ENCODE measurements at regions of chr19 and their contacts with region 1.

Region 1: GRCh38 chr19:58380722-58381466 is at the start of gene ZNF837:
- DNase-seq: peak; percentile 90 to 100 (median 98)
- ATAC-seq: peak; percentile 93
- H3K4me3 ChIP-seq: peak within 1 kb of the TSS; percentile 97
- H3K4me3 Mint-ChIP-seq: peak within 1 kb of the TSS; percentile 87 to 98 (median 91)
- H3K27ac ChIP-seq: peak within 1 kb of the TSS; percentile 96
- H3K27ac Mint-ChIP-seq: peak within 1 kb of the TSS; percentile 93 to 97 (median 97)
- H3K4me1 ChIP-seq: peaks cover 21 to 25% of the 10 kb centered on the region in 2 donors
- H3K4me1 Mint-ChIP-seq: peaks cover 23 to 40% (median 34%) of the 10 kb centered on the region in 7 donors
- H3K27me3 ChIP-seq: no peaks in the 10 kb centered on the region
- H3K27me3 Mint-ChIP-seq: no peaks in the 10 kb centered on the region
- total RNA-seq, gene ZNF837: 1.4 to 4.3 (median 2.4) TPM

Region 2: GRCh38 chr19:58166708-58167280 is 214.1 kb before region 1 on chr19:
- CTCF ChIA-PET with region 1: no interaction called
- POLR2A ChIA-PET with region 1: no interaction called
- intact Hi-C with region 1: no loop called
- DNase-seq: no peak
- ATAC-seq: no peak
- H3K4me3 ChIP-seq: no peak overlapping the region
- H3K4me3 Mint-ChIP-seq: peak overlapping the region in 1 of 10 donors; percentile 16
- H3K27ac ChIP-seq: no peak overlapping the region
- H3K27ac Mint-ChIP-seq: no peak overlapping the region
- H3K4me1 ChIP-seq: no peaks in the 10 kb centered on the region
- H3K4me1 Mint-ChIP-seq: peaks cover 0 to 2% (median 0%) of the 10 kb centered on the region in 7 donors
- H3K27me3 ChIP-seq: no peaks in the 10 kb centered on the region
- H3K27me3 Mint-ChIP-seq: peaks cover 0 to 4% (median 0%) of the 10 kb centered on the region in 5 donors

Region 3: GRCh38 chr19:58252102-58252685 is 128.7 kb before region 1 on chr19:
- CTCF ChIA-PET with region 1: no interaction called
- POLR2A ChIA-PET with region 1: no interaction called
- intact Hi-C with region 1: no loop called
- DNase-seq: no peak
- ATAC-seq: no peak
- H3K4me3 ChIP-seq: no peak overlapping the region
- H3K4me3 Mint-ChIP-seq: no peak overlapping the region
- H3K27ac ChIP-seq: no peak overlapping the region
- H3K27ac Mint-ChIP-seq: no peak overlapping the region
- H3K4me1 ChIP-seq: no peaks in the 10 kb centered on the region
- H3K4me1 Mint-ChIP-seq: no peaks in the 10 kb centered on the region
- H3K27me3 ChIP-seq: no peaks in the 10 kb centered on the region
- H3K27me3 Mint-ChIP-seq: no peaks in the 10 kb centered on the region

Region 4: GRCh38 chr19:58278157-58279041 is 102.5 kb before region 1 on chr19 and contains the start of gene ZNF8:
- CTCF ChIA-PET with region 1: no interaction called
- POLR2A ChIA-PET with region 1: no interaction called
- intact Hi-C with region 1: loop called (anchors 1 kb)
- DNase-seq: peak; percentile 84 to 96 (median 93)
- ATAC-seq: peak; percentile 99
- H3K4me3 ChIP-seq: peak within 1 kb of the TSS; percentile 93
- H3K4me3 Mint-ChIP-seq: peak within 1 kb of the TSS; percentile 89 to 99 (median 95)
- H3K27ac ChIP-seq: peak within 1 kb of the TSS; percentile 80
- H3K27ac Mint-ChIP-seq: peak within 1 kb of the TSS; percentile 88 to 97 (median 96)
- H3K4me1 ChIP-seq: peaks cover 12 to 15% of the 10 kb centered on the region in 2 donors
- H3K4me1 Mint-ChIP-seq: peaks cover 28 to 63% (median 43%) of the 10 kb centered on the region in 7 donors
- H3K27me3 ChIP-seq: no peaks in the 10 kb centered on the region
- H3K27me3 Mint-ChIP-seq: no peaks in the 10 kb centered on the region
- total RNA-seq, gene ZNF8: 5.2 to 10.5 (median 10.0) TPM

Region 5: GRCh38 chr19:58311345-58311865 is 69.5 kb before region 1 on chr19:
- CTCF ChIA-PET with region 1: no interaction called
- POLR2A ChIA-PET with region 1: no interaction called
- intact Hi-C with region 1: no loop called
- DNase-seq: no peak
- ATAC-seq: no peak
- H3K4me3 ChIP-seq: no peak overlapping the region
- H3K4me3 Mint-ChIP-seq: no peak overlapping the region
- H3K27ac ChIP-seq: no peak overlapping the region
- H3K27ac Mint-ChIP-seq: peak overlapping the region in 1 of 9 donors; percentile 4
- H3K4me1 ChIP-seq: peaks cover 6 to 7% of the 10 kb centered on the region in 2 donors
- H3K4me1 Mint-ChIP-seq: peaks cover 16 to 42% (median 34%) of the 10 kb centered on the region in 7 donors
- H3K27me3 ChIP-seq: no peaks in the 10 kb centered on the region
- H3K27me3 Mint-ChIP-seq: no peaks in the 10 kb centered on the region

Region 6: DNA sequence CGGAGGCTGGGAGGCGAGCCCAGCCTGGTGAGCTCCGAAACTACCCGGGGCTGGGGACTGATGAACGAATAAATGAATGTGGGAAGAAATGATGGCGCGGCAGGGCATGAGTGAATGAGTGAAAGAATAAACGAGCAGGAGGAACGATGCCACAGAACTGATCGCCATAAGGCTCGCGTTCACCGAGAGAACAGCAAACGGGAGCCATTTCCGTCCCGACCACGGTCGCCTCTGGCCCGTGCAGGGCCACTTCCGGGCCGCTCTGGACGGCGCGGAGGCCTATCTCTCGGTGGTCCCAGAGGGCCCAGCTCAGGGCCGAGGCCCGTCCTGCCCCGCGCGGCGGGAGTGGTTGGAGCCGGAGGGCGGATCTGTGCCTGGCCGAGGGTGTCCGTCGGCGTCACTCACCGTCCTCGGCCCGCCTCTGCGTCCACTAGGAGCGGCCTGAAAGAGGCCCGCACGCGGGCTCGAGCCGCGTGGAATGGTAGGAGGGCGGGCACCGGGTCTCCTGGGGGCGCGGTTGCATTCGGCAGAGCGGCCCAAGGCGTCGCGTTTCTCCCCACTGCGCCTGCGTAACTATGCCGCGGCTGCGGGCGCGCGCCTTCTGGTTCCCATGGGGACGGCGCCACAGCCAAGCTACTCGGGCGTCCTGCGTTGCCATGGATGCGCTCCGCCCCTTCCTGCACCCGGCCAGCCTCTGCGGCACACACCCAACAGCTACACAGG is 18.5 kb before region 1 on chr19 and contains the start of gene ZNF497:
- CTCF ChIA-PET with region 1: interaction called, 3 read pairs
- POLR2A ChIA-PET with region 1: interaction called, 34 read pairs
- intact Hi-C with region 1: loop called (anchors 1 kb)
- DNase-seq: peak; percentile 91 to 96 (median 95)
- ATAC-seq: peak; percentile 92
- H3K4me3 ChIP-seq: peak within 1 kb of the TSS; percentile 99
- H3K4me3 Mint-ChIP-seq: peak within 1 kb of the TSS; percentile 89 to 99 (median 95)
- H3K27ac ChIP-seq: peak within 1 kb of the TSS; percentile 78
- H3K27ac Mint-ChIP-seq: peak within 1 kb of the TSS; percentile 71 to 96 (median 90)
- H3K4me1 ChIP-seq: peaks cover 5 to 7% of the 10 kb centered on the region in 2 donors
- H3K4me1 Mint-ChIP-seq: peaks cover 7 to 21% (median 11%) of the 10 kb centered on the region in 7 donors
- H3K27me3 ChIP-seq: no peaks in the 10 kb centered on the region
- H3K27me3 Mint-ChIP-seq: peaks cover 0 to 5% (median 0%) of the 10 kb centered on the region in 5 donors
- total RNA-seq, gene ZNF497: 1.0 to 2.7 (median 1.8) TPM

Region 7: DNA sequence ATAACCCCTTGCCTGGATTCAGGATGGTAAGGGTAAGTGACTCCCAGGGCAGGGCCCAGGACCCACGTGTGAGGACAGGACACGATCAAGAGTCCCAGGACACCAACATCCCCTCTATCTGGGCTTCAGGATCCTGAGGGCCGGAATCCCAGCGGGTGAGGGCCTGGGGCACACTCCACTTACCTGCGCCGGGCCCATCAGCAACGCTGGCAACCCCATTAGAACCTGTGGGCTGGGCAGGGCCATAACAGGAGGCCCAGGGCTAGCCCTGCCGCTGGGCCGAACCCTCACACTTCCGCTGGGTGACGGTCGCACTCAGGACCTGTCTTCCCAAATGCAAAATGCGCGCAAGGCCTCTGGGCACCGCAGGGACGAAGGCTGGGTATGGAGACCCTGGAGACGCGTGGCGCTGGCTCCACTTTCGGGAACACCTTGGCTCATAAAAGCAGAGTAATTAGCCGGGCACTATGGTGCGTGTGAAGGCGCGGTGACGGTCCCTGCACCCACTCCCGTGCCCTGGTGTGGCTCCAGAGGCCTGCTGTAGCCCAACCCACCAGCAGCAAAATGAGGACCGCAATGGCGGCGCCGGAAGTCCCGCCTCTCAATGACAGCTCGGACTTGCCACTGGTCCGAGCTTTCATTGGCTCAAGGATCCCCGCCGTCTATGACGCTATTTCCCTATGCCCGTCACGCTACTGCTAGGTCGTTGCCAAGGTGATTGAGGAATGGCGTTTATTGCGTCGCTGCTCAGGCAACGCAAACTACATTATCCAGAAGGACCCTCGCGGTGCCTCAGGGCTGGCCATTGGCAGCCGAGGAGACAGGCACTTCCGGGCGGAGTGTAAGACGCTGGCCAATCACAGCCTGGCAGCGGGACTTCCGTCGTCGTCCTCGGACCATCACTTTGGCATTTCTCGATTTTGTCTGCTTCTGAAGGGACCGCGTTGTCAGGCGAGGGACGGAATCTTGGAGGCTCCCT is 59.0 kb after region 1 on chr19 and contains the start of gene ZNF132:
- CTCF ChIA-PET with region 1: no interaction called
- POLR2A ChIA-PET with region 1: interaction called, 3 read pairs
- intact Hi-C with region 1: loop called (anchors 1 kb)
- DNase-seq: peak; percentile 78 to 99 (median 95)
- ATAC-seq: peak; percentile 98
- H3K4me3 ChIP-seq: peak within 1 kb of the TSS; percentile 73
- H3K4me3 Mint-ChIP-seq: peak within 1 kb of the TSS; percentile 86 to 99 (median 96)
- H3K27ac ChIP-seq: peak within 1 kb of the TSS; percentile 81
- H3K27ac Mint-ChIP-seq: peak within 1 kb of the TSS; percentile 87 to 99 (median 97)
- H3K4me1 ChIP-seq: peaks cover 17% of the 10 kb centered on the region in 2 donors
- H3K4me1 Mint-ChIP-seq: peaks cover 21 to 35% (median 27%) of the 10 kb centered on the region in 7 donors
- H3K27me3 ChIP-seq: no peaks in the 10 kb centered on the region
- H3K27me3 Mint-ChIP-seq: no peaks in the 10 kb centered on the region
- total RNA-seq, gene ZNF132: 1.2 to 12.9 (median 4.9) TPM

Region 8: GRCh38 chr19:58475714-58476497 is 95.0 kb after region 1 on chr19 and contains the start of gene ZNF446:
- CTCF ChIA-PET with region 1: no interaction called
- POLR2A ChIA-PET with region 1: no interaction called
- intact Hi-C with region 1: loop called (anchors 1 kb)
- DNase-seq: peak; percentile 84 to 97 (median 96)
- ATAC-seq: peak; percentile 92
- H3K4me3 ChIP-seq: peak within 1 kb of the TSS; percentile 77
- H3K4me3 Mint-ChIP-seq: peak within 1 kb of the TSS; percentile 78 to 99 (median 96)
- H3K27ac ChIP-seq: peak within 1 kb of the TSS; percentile 91
- H3K27ac Mint-ChIP-seq: peak within 1 kb of the TSS; percentile 87 to 100 (median 99)
- H3K4me1 ChIP-seq: peaks cover 14 to 16% of the 10 kb centered on the region in 2 donors
- H3K4me1 Mint-ChIP-seq: peaks cover 6 to 29% (median 17%) of the 10 kb centered on the region in 7 donors
- H3K27me3 ChIP-seq: no peaks in the 10 kb centered on the region
- H3K27me3 Mint-ChIP-seq: no peaks in the 10 kb centered on the region
- total RNA-seq, gene ZNF446: 9.5 to 20.0 (median 15.1) TPM

Region 9: GRCh38 chr19:58519355-58520256 is 138.7 kb after region 1 on chr19 and contains the start of gene ZBTB45:
- CTCF ChIA-PET with region 1: interaction called, 3 read pairs
- POLR2A ChIA-PET with region 1: no interaction called
- intact Hi-C with region 1: loop called (anchors 1 kb)
- DNase-seq: peak; percentile 81 to 97 (median 88)
- ATAC-seq: peak; percentile 89
- H3K4me3 ChIP-seq: peak within 1 kb of the TSS; percentile 76
- H3K4me3 Mint-ChIP-seq: peak within 1 kb of the TSS; percentile 90 to 97 (median 95)
- H3K27ac ChIP-seq: peak within 1 kb of the TSS; percentile 86
- H3K27ac Mint-ChIP-seq: peak within 1 kb of the TSS; percentile 92 to 99 (median 97)
- H3K4me1 ChIP-seq: peaks cover 10 to 14% of the 10 kb centered on the region in 2 donors
- H3K4me1 Mint-ChIP-seq: peaks cover 29 to 43% (median 37%) of the 10 kb centered on the region in 7 donors
- H3K27me3 ChIP-seq: no peaks in the 10 kb centered on the region
- H3K27me3 Mint-ChIP-seq: peaks cover 0 to 3% (median 0%) of the 10 kb centered on the region in 5 donors
- total RNA-seq, gene ZBTB45: 9.8 to 19.2 (median 17.0) TPM